GM13977 (cell line): ENCODE measurements at regions of chr17 and their contacts with region 1.

Region 1: GRCh38 chr17:9968902-9969617 is 64.0 kb upstream of the RCVRN start:
- DNase-seq: no peak
- CTCF ChIP-seq: no peak

Region 2: DNA sequence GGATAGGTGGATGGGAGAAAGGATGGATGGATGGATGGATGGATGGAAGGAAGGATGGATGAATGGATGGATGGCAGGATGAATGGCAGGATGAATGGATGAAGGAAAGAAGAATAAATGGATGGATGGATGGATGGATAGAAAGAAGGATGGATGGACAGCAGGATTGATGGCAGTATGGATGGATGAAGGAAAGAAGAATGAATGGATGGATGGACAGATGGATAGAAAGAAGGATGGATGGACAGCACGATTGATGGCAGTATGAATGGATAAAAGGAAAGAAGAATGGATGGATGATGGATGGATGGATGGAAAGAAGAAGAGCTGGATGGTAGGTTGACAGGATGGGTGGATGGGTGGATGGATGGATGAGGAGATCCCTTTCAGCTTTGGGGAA is 1329.4 kb before region 1 on chr17:
- in situ Hi-C with region 1: no loop called
- DNase-seq: no peak
- CTCF ChIP-seq: no peak

Region 3: GRCh38 chr17:9676742-9677387 is 292.2 kb before region 1 on chr17:
- in situ Hi-C with region 1: no loop called
- DNase-seq: no peak
- CTCF ChIP-seq: no peak

Region 4: DNA sequence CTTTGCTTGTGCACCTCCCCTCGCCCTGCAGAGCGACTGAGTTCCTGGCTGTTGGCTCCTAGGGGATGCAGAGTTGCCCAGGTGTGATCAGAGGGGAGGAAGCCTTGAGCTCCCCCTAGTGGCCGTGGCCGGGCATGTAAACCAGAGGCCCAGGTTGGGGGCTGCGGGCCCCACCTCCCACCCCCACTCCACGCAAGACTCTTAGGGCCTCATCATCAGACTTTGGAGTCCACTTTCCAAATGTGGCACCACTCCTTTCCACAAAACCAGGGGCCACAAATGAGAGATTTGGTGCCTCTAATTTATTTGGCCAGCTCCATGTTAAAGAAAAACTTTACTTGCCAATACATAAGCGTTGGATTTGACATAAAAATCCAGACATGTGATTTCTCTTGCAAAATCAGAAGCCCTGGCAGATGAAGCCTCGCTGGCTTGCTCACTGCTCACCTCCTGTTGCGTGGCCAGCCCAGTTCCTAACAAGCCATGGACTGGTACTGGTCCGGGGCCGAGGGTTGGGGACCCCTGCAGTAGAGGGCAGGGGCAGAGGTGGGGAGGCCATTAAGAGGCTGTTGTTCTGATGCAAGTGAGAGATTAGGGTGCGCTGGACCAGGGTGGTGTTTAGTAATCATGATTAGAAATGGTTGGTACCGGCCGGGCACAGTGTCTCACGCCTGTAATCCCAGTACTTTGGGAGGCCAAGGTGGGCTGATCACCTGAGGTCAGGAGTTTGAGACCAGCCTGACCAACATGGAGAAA is 258.0 kb after region 1 on chr17:
- in situ Hi-C with region 1: loop called (anchors 10 kb)
- DNase-seq: peak; percentile 74
- CTCF ChIP-seq: peak; percentile 90

Region 5: GRCh38 chr17:10668771-10669170 is 699.7 kb after region 1 on chr17:
- in situ Hi-C with region 1: no loop called
- DNase-seq: no peak
- CTCF ChIP-seq: no peak